ENCODE measurements at regions of chr10 and their contacts with region 1.

Region 1: DNA sequence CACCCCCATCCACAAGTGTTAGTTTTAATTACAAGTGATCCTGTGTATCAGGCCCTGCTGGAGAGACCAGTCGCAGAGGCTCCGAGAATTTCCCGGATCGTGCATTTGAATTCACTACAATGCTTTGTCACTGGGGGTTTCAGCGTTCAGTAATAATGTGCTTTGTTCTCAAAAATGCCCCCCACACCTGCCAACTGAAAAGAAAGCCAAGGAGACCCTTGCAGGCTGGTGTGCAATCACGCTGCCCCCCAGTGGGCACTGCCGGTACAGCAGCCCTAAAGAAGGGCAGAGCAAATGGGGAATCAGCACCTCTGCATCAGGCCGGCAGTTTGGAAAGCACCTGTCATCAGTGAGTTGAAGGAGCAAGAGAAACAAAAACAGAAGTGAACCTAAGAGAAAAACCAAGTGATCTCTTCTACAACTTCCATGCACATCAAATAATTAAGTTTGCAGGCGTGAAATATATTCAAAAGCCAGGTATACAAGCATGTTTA is 177.6 kb downstream of the PARD3 start:
- DNase-seq: peak; percentile 65
- ATAC-seq: no peak
- H3K4me3 Mint-ChIP-seq: no peak overlapping the region
- H3K27ac Mint-ChIP-seq: no peak overlapping the region
- H3K4me1 Mint-ChIP-seq: peaks cover 1% of the 10 kb centered on the region
- H3K27me3 Mint-ChIP-seq: no peaks in the 10 kb centered on the region

Region 2: GRCh38 chr10:33330543-33331378 is 1306.7 kb before region 1 on chr10:
- CTCF ChIA-PET with region 1: interaction called, 20 read pairs
- DNase-seq: peak; percentile 83
- ATAC-seq: peak; percentile 41
- H3K4me3 Mint-ChIP-seq: no peak overlapping the region
- H3K27ac Mint-ChIP-seq: no peak overlapping the region
- H3K4me1 Mint-ChIP-seq: peaks cover 18% of the 10 kb centered on the region
- H3K27me3 Mint-ChIP-seq: peaks cover 59% of the 10 kb centered on the region

Region 3: DNA sequence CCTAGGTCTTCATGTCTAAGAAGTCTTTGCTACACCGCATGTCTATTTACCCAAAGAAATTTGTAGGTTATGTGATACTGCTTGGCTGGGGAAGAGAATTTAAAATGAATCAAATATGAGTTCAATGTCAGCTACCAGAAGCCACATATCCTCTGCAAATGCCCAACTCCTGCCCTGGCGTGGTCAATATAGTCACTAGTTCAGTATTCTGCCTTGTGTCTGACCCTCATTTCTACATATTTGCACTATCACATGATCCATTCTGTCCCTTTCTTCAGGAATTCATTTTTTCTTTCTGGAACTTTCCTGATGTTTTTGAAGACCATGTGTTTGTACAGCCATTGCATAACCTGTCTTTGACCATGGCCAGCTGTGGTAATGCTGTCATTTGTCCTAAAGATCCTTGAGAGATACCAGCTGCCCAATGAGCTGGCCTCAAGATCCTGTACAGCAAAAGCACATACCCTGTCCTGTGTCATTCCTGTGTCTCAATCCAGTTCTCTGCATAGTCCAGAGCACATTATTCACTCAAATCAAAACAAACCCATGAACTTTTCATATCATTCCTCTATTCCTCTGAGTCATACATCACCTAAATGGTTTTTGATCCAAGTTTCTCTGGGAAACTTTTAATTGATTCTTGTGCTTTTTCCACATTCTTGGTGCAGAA is 346.9 kb before region 1 on chr10:
- CTCF ChIA-PET with region 1: no interaction called
- DNase-seq: no peak
- ATAC-seq: no peak
- H3K4me3 Mint-ChIP-seq: no peak overlapping the region
- H3K27ac Mint-ChIP-seq: no peak overlapping the region
- H3K4me1 Mint-ChIP-seq: no peaks in the 10 kb centered on the region
- H3K27me3 Mint-ChIP-seq: no peaks in the 10 kb centered on the region

Region 4: DNA sequence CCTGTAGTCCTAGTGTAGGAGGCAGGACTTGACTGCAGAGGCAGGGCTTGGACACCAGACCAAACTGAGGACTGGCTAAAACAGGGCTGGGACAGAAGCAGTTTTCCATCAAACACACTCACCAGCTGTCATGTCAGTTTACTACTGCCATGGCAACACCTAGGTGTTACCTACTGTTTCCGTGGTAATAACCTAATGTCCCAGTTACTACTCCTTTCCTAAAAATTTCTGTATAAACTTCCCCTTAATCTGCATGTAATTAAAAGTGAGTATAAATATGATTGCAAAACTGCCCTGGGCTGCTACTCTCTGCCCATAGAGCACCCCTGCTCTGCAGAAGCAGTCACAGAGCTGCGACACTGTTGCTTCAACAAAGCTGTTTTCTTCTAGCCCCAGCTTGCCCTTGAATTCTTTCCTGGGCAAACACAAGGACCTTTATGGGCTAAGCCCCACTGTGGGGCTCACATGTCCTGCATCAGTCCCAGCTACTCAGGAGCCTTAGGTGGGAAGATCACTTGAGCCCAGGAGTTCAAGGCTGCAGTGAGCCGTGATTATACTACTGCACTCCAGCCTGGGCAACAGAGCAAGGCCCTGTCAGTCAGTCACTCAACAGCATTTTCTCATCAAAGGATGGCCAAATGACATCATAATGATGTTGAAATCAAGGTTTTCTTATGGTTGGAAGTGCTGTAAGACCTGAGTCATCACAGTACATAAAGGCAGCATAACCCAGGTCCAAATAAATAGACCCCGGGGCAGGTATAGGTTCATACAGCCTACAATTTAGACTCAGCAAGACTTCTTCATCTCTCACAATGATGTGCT is 163.7 kb before region 1 on chr10:
- CTCF ChIA-PET with region 1: no interaction called
- DNase-seq: no peak
- ATAC-seq: no peak
- H3K4me3 Mint-ChIP-seq: no peak overlapping the region
- H3K27ac Mint-ChIP-seq: no peak overlapping the region
- H3K4me1 Mint-ChIP-seq: no peaks in the 10 kb centered on the region
- H3K27me3 Mint-ChIP-seq: no peaks in the 10 kb centered on the region

Region 5: DNA sequence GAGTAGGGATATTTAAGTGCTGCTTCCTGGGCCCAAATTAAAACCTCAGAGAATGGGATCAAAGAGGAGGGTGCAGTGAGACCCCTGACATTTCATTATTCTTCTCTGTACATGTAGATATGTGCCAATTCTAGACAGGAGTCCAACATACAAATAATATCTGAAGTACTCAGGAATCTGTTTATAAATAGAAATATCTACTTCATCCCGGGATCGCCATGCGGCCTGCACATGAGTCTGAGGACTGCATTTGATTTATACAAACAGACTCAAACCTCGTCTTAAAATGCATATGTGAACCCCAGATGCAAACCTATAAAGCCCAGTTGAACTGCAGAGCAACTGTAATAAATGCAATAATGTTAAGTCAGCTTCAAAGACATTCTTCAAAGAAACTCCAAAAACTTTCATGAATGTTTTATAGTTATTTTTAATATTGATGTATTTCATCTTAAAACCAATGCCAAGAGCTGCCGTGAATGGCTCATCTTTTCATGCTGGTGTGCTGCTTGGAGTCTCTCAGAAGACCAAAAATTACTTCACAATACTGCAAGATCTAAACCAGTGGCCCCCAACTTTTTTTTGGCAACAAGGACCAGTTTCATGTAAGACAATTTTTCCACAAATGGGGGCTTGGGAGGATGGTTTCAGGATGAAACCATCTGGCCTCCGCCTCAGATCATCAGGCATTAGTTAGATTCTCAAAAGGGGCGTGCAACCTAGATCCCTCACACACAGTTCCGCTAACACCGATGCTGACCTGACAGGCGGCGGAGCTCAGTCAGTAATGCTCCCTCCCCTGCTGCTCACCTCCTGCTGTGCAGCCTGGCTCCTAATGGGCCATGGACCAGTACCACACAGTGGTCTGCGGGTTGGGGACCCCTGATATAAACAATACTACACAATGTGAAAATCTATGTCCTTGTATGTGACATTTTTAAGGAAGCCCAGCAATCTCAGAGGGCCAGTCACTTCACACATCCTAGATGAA is 10.7 kb after region 1 on chr10:
- CTCF ChIA-PET with region 1: interaction called, 11 read pairs
- DNase-seq: no peak
- ATAC-seq: no peak
- H3K4me3 Mint-ChIP-seq: no peak overlapping the region
- H3K27ac Mint-ChIP-seq: no peak overlapping the region
- H3K4me1 Mint-ChIP-seq: no peaks in the 10 kb centered on the region
- H3K27me3 Mint-ChIP-seq: peaks cover 3% of the 10 kb centered on the region

Measured in activated CD8-positive, alpha-beta memory T cell treated with anti-CD3 and anti-CD28 coated beads, Interleukin-2, amount 10 ng/mL, durations not matched to agents 7 days and 5 days (primary cell).